Heart left ventricle (tissue), 16 donors: ENCODE measurements at regions of chr1 and their contacts with region 1.

Region 1: DNA sequence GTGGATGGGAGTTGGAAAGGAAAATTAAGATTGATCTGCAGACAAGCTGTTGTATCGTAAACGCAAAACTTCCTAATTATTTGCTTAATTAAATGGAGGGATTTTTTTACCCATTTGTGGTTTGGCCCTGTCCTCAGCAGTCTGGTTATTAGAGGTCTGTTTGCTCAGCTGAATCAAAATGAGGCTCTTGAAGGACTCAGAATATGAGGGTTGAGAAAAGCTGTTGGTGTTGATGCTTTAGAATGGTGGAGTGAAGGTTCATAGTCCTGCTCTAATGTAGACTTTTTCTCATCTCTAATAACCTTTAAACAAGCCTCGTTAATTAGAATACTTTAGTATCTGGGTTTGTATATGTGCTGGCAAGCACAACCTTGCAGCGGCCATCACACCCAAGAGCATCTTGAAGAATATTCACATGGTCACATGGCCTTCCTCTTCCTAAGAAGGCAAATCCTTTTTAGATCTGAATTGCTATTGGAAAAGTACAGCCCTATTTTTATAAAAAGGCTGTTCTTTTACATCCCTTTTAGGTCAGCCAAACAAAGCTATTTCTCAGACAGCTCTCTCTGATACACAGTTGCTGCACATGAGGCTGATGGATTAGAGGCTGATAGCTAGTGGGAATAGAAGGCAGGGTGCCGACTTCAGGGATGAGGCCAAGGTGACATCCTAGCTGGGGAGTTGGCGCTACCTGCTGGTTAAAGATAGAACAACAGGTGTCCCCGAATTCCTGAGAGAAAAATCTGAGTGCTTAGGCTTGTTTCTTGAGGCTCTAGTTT is 53.8 kb downstream of the MACF1 start:
- DNase-seq: peak in 4 of 5 donors; percentile 58 to 72 (median 69)
- ATAC-seq: peak; percentile 63 to 88 (median 84)
- H3K4me3 ChIP-seq: no peak overlapping the region
- H3K27ac ChIP-seq: peak overlapping the region in 10 of 12 donors; percentile 2 to 53 (median 17)
- H3K4me1 ChIP-seq: peaks cover 0 to 39% (median 20%) of the 10 kb centered on the region in 12 donors
- H3K27me3 ChIP-seq: no peaks in the 10 kb centered on the region
- CTCF ChIP-seq: peak; percentile 77 to 94 (median 85)
- POLR2A ChIP-seq: no peak

Region 2: DNA sequence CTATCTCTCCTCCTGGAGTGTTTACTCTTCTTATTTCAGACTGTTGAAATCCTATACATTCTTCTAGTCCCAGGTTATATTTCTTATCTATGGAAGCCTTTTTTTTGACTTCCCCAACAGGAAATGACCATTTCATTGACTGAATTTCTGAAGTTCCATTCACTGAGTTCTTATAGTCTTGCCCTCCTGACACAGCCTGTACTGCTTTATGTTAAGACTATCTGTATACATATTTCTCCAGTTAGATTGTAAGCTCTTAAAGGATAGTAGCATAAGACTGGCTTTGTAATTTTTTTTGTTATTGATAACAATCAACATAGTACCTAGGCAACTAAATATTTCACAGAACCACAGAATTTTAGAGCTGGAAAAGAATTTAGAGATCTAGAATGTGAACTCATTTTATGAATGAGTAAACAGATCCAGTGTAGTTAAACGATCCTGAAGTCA is 68.7 kb before region 1 on chr1:
- intact Hi-C with region 1: loop called in 8 of 10 experiments (anchors 1 to 5 kb)
- DNase-seq: no peak
- ATAC-seq: no peak
- H3K4me3 ChIP-seq: no peak overlapping the region
- H3K27ac ChIP-seq: peak overlapping the region in 1 of 12 donors; percentile 91
- H3K4me1 ChIP-seq: peaks cover 0 to 58% (median 23%) of the 10 kb centered on the region in 12 donors
- H3K27me3 ChIP-seq: no peaks in the 10 kb centered on the region
- CTCF ChIP-seq: no peak
- POLR2A ChIP-seq: no peak

Region 3: DNA sequence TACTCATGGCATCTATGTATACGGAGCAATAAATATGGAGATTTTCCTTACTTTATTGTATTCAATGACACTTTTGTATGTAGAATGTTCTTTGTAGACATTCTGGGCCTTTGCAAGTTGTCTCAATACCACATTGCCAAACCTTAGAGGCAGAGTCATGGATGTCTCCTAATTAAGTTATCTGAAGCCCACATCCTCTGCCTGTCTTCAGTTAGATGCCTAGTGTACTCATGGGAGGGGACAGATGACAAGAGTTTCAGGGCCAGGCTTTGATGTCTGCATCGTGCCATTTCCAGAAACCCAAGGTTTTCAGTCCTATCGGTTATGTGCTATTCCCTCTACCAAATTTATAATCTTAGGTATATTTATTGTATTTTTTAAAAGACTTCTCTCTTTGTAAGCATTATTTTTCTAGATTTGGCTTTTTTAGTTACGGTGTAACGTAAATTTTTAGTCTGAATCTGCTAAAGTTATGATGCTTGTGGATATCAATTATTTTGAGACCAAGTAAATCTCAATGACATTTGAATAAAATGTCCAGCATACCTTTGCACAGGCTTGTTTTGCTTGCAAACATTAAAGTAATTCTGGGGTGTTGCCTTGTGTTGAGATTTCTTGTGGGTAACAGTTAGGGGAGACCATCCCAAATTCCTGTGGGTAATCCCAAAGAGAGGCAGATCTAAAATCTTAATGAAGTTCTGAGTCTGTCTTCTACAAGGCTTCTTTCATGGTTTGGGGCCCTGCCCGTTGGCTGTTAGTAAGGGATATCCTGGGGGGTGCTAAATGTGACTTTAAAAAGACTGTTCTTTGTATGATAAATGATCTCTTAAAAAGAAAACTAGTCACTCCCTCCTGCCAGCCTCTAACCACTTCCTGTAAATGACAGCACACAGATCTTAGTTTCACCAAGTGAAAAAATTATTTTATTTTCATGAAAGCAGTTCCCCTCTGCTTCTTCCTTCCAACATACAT is 61.8 kb before region 1 on chr1:
- intact Hi-C with region 1: loop called in 9 of 10 experiments (anchors 1 to 5 kb)
- DNase-seq: no peak
- ATAC-seq: no peak
- H3K4me3 ChIP-seq: peak overlapping the region in 1 of 12 donors; percentile 15
- H3K27ac ChIP-seq: peak overlapping the region in 5 of 12 donors; percentile 21 to 91 (median 41)
- H3K4me1 ChIP-seq: peaks cover 8 to 67% (median 37%) of the 10 kb centered on the region in 12 donors
- H3K27me3 ChIP-seq: no peaks in the 10 kb centered on the region
- CTCF ChIP-seq: no peak
- POLR2A ChIP-seq: no peak

Region 4: GRCh38 chr1:39204441-39205081 is 53.8 kb before region 1 on chr1 and contains the start of gene MACF1:
- intact Hi-C with region 1: loop called in 5 of 10 experiments (anchors 2 to 5 kb)
- DNase-seq: peak; percentile 71 to 82 (median 78)
- ATAC-seq: peak; percentile 90 to 93 (median 92)
- H3K4me3 ChIP-seq: peak within 1 kb of the TSS; percentile 24 to 72 (median 52)
- H3K27ac ChIP-seq: peak within 1 kb of the TSS; percentile 83 to 98 (median 93)
- H3K4me1 ChIP-seq: peaks cover 6 to 53% (median 28%) of the 10 kb centered on the region in 12 donors
- H3K27me3 ChIP-seq: no peaks in the 10 kb centered on the region
- CTCF ChIP-seq: peak; percentile 13 to 69 (median 44)
- POLR2A ChIP-seq: peak in 1 of 2 donors; percentile 23
- total RNA-seq, gene MACF1: 183 to 436 (median 290) TPM

Region 5: DNA sequence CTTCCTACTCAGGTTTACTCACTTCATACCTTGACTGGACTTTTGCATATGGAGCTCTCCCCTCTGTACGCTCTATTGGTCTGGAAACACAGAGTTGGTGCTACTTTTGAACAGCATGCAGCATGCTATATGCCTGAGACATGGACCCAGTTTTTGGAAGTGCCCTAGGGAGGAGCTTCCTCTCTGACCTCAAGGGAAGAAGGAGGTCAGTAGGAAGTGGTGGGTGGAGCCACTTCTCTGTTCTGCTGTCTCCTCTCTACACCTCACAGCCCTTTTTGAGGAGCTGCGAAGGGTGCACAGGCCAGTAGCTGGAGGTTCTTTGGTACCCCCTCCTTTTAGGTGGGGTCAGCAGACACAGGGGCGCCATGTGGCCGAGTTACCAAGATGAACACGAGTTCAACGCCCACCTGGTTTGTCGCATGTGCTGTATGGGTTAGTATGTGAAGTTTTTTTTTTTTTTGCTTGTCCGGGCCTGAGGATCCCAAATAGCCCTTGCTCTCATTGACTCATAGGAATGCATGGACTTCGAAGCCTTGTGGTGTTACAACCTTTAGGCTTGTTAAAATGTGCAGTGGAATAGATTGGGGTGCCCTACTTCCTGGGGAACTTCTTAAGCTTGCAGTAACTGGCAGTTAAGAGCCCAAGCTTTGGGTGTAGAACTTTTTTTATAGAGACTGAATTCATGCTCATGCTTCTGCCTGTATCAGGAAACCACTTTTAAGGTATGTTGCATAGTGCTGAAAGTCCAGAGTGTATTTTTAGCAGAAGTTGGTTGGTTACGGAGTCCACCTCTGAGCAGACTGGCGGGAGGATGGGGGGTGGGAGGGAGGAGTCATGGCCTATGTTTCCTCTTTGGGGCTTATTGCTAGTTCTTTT is 43.1 kb before region 1 on chr1:
- intact Hi-C with region 1: loop called in 1 of 10 experiments (anchors 5 kb)
- DNase-seq: peak in 3 of 5 donors; percentile 33 to 57 (median 40)
- ATAC-seq: peak; percentile 43 to 70 (median 52)
- H3K4me3 ChIP-seq: peak overlapping the region in 9 of 12 donors; percentile 13 to 57 (median 34)
- H3K27ac ChIP-seq: peak overlapping the region in 11 of 12 donors; percentile 73 to 92 (median 81)
- H3K4me1 ChIP-seq: peaks cover 3 to 85% (median 69%) of the 10 kb centered on the region in 12 donors
- H3K27me3 ChIP-seq: no peaks in the 10 kb centered on the region
- CTCF ChIP-seq: no peak
- POLR2A ChIP-seq: no peak